GM12878 (cell line): ENCODE measurements at regions of chr10 and their contacts with region 1.

Region 1: GRCh38 chr10:94320285-94320914 is 42.3 kb downstream of the NOC3L start:
- DNase-seq: no peak
- ATAC-seq: peak; percentile 89
- H3K4me3 ChIP-seq: no peak overlapping the region
- H3K27ac ChIP-seq: no peak overlapping the region
- H3K4me1 ChIP-seq: no peaks in the 10 kb centered on the region
- H3K27me3 ChIP-seq: no peaks in the 10 kb centered on the region
- CTCF ChIP-seq: peak; percentile 69 to 80 (median 69)
- EP300 ChIP-seq: no peak
- POLR2A ChIP-seq: no peak
- RAD21 ChIP-seq: peak; percentile 65

Region 2: GRCh38 chr10:94279835-94280709 is 40.3 kb before region 1 on chr10:
- CTCF ChIA-PET with region 1: interaction called, 5 read pairs
- POLR2A ChIA-PET with region 1: no interaction called
- RAD21 ChIA-PET with region 1: interaction called, 3 read pairs
- SMC1A ChIA-PET with region 1: interaction called, 3 read pairs
- in situ Hi-C with region 1: no loop called
- intact Hi-C with region 1: loop called (anchors 1 kb)
- DNase-seq: peak; percentile 11
- ATAC-seq: peak; percentile 94
- H3K4me3 ChIP-seq: no peak overlapping the region
- H3K27ac ChIP-seq: no peak overlapping the region
- H3K4me1 ChIP-seq: no peaks in the 10 kb centered on the region
- H3K27me3 ChIP-seq: 0 out of 4 replicates have a peak, but pooled peaks cover 0 to 3% of the 10 kb centered on the region in 2 experiments
- CTCF ChIP-seq: peak; percentile 82 to 96 (median 88)
- EP300 ChIP-seq: no peak
- POLR2A ChIP-seq: no peak
- RAD21 ChIP-seq: peak; percentile 64

Region 3: DNA sequence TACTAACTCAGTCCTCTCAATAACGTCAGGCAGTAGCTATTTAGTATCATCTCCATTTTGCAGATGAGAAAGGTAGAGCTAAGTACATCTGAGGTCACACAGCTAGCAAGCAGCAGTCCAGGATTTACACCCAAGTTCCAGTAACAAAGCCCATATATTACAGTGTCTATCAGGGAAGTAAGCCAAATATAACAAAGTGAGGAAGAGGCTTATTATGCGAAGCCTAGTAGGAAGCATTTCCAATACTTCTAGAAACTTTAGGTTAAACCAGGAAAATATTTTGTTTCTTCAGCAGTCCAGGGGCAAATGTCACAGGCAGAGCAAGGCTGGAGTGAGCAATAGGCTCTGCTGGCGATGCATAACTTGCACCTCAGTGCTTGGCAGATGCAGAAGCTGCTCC is 11.5 kb before region 1 on chr10:
- CTCF ChIA-PET with region 1: interaction called, 44 read pairs
- POLR2A ChIA-PET with region 1: no interaction called
- RAD21 ChIA-PET with region 1: no interaction called
- SMC1A ChIA-PET with region 1: interaction called, 3 read pairs
- in situ Hi-C with region 1: no loop called
- intact Hi-C with region 1: no loop called
- DNase-seq: no peak
- ATAC-seq: no peak
- H3K4me3 ChIP-seq: no peak overlapping the region
- H3K27ac ChIP-seq: no peak overlapping the region
- H3K4me1 ChIP-seq: no peaks in the 10 kb centered on the region
- H3K27me3 ChIP-seq: no peaks in the 10 kb centered on the region; a peak in 1 of 4 replicates
- CTCF ChIP-seq: no peak
- EP300 ChIP-seq: no peak
- POLR2A ChIP-seq: no peak
- RAD21 ChIP-seq: no peak

Region 4: DNA sequence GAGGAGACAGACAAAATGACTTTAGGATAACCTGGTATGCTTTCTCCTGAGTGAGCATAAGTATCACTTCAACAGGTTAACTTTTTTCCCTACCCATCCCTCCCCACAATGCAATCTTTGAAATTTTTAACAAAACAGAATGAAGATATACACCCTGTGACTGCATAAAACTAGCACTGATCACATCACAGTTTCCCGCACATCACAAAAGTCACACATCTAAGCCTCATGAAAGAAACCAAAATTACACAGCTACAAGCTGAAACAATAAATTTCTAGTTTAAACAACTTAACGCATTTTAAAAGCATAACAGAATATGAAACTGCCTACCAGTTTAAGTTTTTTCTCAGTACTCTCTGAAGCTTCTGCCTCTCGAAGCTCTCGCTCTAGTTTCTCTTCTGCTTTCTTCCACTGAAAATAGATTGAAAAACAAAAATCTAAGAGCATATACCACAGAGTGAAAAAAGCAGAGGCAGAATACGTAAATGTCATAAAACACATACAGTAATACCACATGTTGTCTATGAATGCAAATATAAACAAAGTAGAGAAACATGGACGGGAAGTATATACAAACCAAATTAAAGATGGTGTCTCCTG is 24.2 kb after region 1 on chr10:
- CTCF ChIA-PET with region 1: interaction called, 20 read pairs
- POLR2A ChIA-PET with region 1: no interaction called
- RAD21 ChIA-PET with region 1: interaction called, 4 read pairs
- SMC1A ChIA-PET with region 1: interaction called, 4 read pairs
- in situ Hi-C with region 1: no loop called
- intact Hi-C with region 1: no loop called
- DNase-seq: peak; percentile 58
- ATAC-seq: peak; percentile 95
- H3K4me3 ChIP-seq: peak overlapping the region; percentile 16; the same call in 1 of the 2 replicates
- H3K27ac ChIP-seq: peak overlapping the region; percentile 73
- H3K4me1 ChIP-seq: peaks cover 9% of the 10 kb centered on the region
- H3K27me3 ChIP-seq: no peaks in the 10 kb centered on the region
- CTCF ChIP-seq: no peak
- EP300 ChIP-seq: peak in 1 of 2 experiments; percentile 68
- POLR2A ChIP-seq: no peak
- RAD21 ChIP-seq: no peak

Region 5: GRCh38 chr10:94362360-94363250 is 42.2 kb after region 1 on chr10 and contains the start of gene NOC3L:
- CTCF ChIA-PET with region 1: interaction called, 23 read pairs
- POLR2A ChIA-PET with region 1: no interaction called
- RAD21 ChIA-PET with region 1: interaction called, 7 read pairs
- SMC1A ChIA-PET with region 1: no interaction called
- in situ Hi-C with region 1: no loop called
- intact Hi-C with region 1: no loop called
- DNase-seq: peak; percentile 76
- ATAC-seq: peak; percentile 98
- H3K4me3 ChIP-seq: peak within 1 kb of the TSS; percentile 71
- H3K27ac ChIP-seq: peak within 1 kb of the TSS; percentile 85
- H3K4me1 ChIP-seq: peaks cover 4% of the 10 kb centered on the region; the same call in 1 of the 2 replicates
- H3K27me3 ChIP-seq: no peaks in the 10 kb centered on the region
- CTCF ChIP-seq: peak; percentile 63 to 87 (median 74); a peak in 5 of 6 replicates
- EP300 ChIP-seq: 0 out of 4 replicates have a peak, but pooled peaks of 1 of the 2 experiments have one; percentile 11
- POLR2A ChIP-seq: peak; percentile 87
- RAD21 ChIP-seq: 0 out of 2 replicates have a peak, but pooled peaks have one; percentile 21
- polyA plus RNA-seq, gene NOC3L: 37.7 to 38.2 TPM